Common myeloid progenitor, CD34-positive (primary cell): ENCODE measurements at regions of chr10 and their contacts with region 1.

Region 1: DNA sequence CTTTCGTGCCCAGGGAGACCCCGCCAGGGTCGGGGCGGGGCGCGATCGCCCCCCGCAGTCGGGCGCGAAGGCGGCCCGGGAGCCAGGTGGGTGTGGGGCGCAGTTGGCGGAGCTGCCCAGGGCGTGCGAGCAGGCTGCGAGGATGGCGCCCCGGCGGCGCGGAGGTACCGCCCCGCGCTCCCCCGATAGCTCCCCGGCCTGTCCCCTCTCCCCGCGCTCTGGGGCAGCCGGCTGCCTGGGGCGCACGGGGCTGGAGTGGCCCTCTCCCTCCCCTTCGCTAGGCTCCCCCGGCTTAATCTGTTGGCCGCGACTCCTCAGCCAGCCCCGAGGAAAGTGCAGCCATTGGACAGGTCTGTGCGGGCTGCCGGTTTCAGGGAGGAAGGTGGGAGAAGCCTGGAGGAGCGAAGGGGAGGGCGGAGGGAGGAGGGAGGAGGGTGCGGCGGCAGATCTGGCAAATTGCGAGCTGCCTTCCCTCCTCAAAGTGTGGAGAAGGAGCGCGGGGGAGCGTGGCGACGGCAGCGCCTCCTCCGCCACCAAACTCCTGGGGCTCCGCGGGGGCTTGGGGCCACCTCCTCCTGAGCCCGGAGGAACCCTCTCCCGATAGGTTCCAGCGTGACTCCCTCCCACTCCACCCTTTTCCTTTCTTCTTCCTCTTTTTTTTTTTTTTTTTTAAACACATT is 361 bp upstream of the PLXDC2 start:
- DNase-seq: peak; percentile 70 to 87 (median 79)
- H3K4me3 ChIP-seq: peak overlapping the region; percentile 79 to 100 (median 94)
- H3K27ac ChIP-seq: peak overlapping the region; percentile 46 to 78
- H3K4me1 ChIP-seq: peaks cover 7 to 54% (median 25%) of the 10 kb centered on the region in 4 experiments
- H3K27me3 ChIP-seq: peaks cover 0 to 10% (median 0%) of the 10 kb centered on the region in 5 experiments

Region 2: GRCh38 chr10:19791032-19791431 is 24.8 kb before region 1 on chr10:
- CTCF ChIA-PET with region 1: interaction called, 13 read pairs
- POLR2A ChIA-PET with region 1: no interaction called
- DNase-seq: no peak
- H3K4me3 ChIP-seq: no peak overlapping the region
- H3K27ac ChIP-seq: no peak overlapping the region
- H3K4me1 ChIP-seq: no peaks in the 10 kb centered on the region
- H3K27me3 ChIP-seq: no peaks in the 10 kb centered on the region